Activated CD4-positive, alpha-beta T cell treated with anti-CD3 and anti-CD28 coated beads, Interleukin-2, amount 10 ng/mL, durations not matched to agents 24 days and 14 days (primary cell): ENCODE measurements at regions of chr4 and their contacts with region 1.

Region 1: DNA sequence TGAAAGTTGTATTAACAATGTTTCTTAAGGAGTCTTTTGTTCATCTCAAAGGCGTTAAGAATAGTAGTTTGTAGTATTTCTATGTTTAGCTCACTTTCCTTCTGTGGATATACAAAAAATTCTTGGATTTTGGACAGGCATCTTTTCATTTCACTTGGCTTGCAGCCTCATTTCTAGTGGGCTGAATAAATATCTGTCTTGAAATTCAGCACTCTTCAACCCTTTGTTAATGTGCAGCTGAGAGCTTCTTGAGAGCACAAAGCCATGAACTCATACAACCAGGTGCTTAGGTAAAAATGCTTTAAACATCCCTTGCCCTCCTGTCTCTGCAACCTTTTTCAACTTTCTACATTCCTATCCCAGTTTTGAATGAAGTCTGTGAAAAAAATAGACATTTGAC is 1003.2 kb downstream of the C4orf33 start:
- DNase-seq: no peak
- H3K4me3 Mint-ChIP-seq: no peak overlapping the region
- H3K27ac Mint-ChIP-seq: no peak overlapping the region
- H3K4me1 Mint-ChIP-seq: no peaks in the 10 kb centered on the region
- H3K27me3 Mint-ChIP-seq: no peaks in the 10 kb centered on the region

Region 2: GRCh38 chr4:129429581-129430320 is 669.4 kb before region 1 on chr4:
- intact Hi-C with region 1: no loop called
- DNase-seq: no peak
- H3K4me3 Mint-ChIP-seq: no peak overlapping the region
- H3K27ac Mint-ChIP-seq: no peak overlapping the region
- H3K4me1 Mint-ChIP-seq: no peaks in the 10 kb centered on the region
- H3K27me3 Mint-ChIP-seq: no peaks in the 10 kb centered on the region

Region 3: GRCh38 chr4:130110189-130110588 is 11.1 kb after region 1 on chr4:
- intact Hi-C with region 1: loop called (anchors 1 kb)
- DNase-seq: no peak
- H3K4me3 Mint-ChIP-seq: no peak overlapping the region
- H3K27ac Mint-ChIP-seq: no peak overlapping the region
- H3K4me1 Mint-ChIP-seq: no peaks in the 10 kb centered on the region
- H3K27me3 Mint-ChIP-seq: no peaks in the 10 kb centered on the region

Region 4: GRCh38 chr4:130233377-130234047 is 134.4 kb after region 1 on chr4:
- intact Hi-C with region 1: no loop called
- DNase-seq: peak; percentile 57
- H3K4me3 Mint-ChIP-seq: peak overlapping the region; percentile 3
- H3K27ac Mint-ChIP-seq: no peak overlapping the region
- H3K4me1 Mint-ChIP-seq: peaks cover 4% of the 10 kb centered on the region
- H3K27me3 Mint-ChIP-seq: no peaks in the 10 kb centered on the region